Endothelial cell of umbilical vein (primary cell): ENCODE measurements at regions of chr1 and their contacts with region 1.

Region 1: GRCh38 chr1:90850898-90851710 is 134.0 kb upstream of the BARHL2 start:
- DNase-seq: peak; percentile 55
- H3K4me3 ChIP-seq: peak overlapping the region; percentile 32 to 45 (median 42)
- H3K27ac ChIP-seq: no peak overlapping the region
- H3K4me1 ChIP-seq: peaks cover 12% of the 10 kb centered on the region
- H3K27me3 ChIP-seq: peaks cover 14 to 44% of the 10 kb centered on the region in 2 experiments
- CTCF ChIP-seq: peak; percentile 24 to 68
- POLR2A ChIP-seq: no peak

Region 2: GRCh38 chr1:90721210-90722194 is 129.6 kb before region 1 on chr1:
- CTCF ChIA-PET with region 1: interaction called, 16 read pairs
- POLR2A ChIA-PET with region 1: no interaction called
- dilution Hi-C with region 1: no loop called
- intact Hi-C with region 1: loop called (anchors 5 kb)
- DNase-seq: peak; percentile 75
- H3K4me3 ChIP-seq: no peak overlapping the region
- H3K27ac ChIP-seq: no peak overlapping the region
- H3K4me1 ChIP-seq: peaks cover 2% of the 10 kb centered on the region
- H3K27me3 ChIP-seq: peaks cover 85 to 97% of the 10 kb centered on the region in 2 experiments
- CTCF ChIP-seq: peak; percentile 87 to 96
- POLR2A ChIP-seq: no peak

Region 3: GRCh38 chr1:90729504-90730242 is 121.4 kb before region 1 on chr1:
- CTCF ChIA-PET with region 1: interaction called, 3 read pairs
- POLR2A ChIA-PET with region 1: no interaction called
- dilution Hi-C with region 1: no loop called
- intact Hi-C with region 1: loop called (anchors 5 kb)
- DNase-seq: no peak
- H3K4me3 ChIP-seq: no peak overlapping the region
- H3K27ac ChIP-seq: no peak overlapping the region
- H3K4me1 ChIP-seq: peaks cover 2% of the 10 kb centered on the region
- H3K27me3 ChIP-seq: peaks cover 75 to 94% of the 10 kb centered on the region in 2 experiments
- CTCF ChIP-seq: peak; percentile 38 to 43
- POLR2A ChIP-seq: no peak

Region 4: DNA sequence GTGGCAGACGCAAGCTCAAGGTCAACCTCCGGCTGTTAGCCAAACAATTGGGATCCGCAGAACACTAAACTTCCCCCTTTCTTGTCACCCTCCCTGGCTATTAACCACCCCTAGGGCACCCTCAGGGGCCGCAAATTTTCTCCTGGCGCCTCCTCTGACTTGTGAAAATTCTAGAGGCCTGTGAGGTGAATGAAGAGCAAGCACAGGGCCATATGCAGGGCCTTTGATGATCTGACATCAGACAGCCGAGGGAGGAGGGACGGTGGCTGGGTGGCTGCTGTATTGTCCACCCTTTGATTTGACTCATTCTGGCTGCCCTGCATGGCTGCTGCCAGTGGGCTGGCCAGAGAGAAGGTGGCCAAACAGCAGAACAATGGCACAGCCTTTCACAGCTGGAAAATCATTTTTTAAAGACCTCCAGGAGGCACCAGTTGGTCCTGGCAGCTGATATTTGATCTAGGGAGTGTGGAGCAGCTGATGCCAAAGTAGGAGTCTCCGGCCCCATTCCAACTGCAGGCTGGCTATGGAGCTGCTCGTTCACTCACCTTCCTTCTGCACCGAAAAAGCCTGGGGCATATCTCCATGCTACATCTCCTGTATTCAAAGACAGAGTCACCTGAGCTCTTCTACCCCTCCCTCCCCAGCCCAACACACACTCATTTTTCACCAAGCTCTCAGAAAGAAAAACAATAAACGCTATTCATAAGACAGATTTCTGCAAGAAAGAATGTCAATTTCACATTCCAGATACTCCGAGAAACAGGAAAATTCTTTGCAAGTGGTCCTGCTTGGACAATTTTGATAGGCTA is 89.1 kb before region 1 on chr1:
- CTCF ChIA-PET with region 1: no interaction called
- POLR2A ChIA-PET with region 1: no interaction called
- dilution Hi-C with region 1: no loop called
- intact Hi-C with region 1: no loop called
- DNase-seq: no peak
- H3K4me3 ChIP-seq: no peak overlapping the region
- H3K27ac ChIP-seq: no peak overlapping the region
- H3K4me1 ChIP-seq: no peaks in the 10 kb centered on the region
- H3K27me3 ChIP-seq: no peaks in the 10 kb centered on the region
- CTCF ChIP-seq: no peak
- POLR2A ChIP-seq: no peak

Region 5: DNA sequence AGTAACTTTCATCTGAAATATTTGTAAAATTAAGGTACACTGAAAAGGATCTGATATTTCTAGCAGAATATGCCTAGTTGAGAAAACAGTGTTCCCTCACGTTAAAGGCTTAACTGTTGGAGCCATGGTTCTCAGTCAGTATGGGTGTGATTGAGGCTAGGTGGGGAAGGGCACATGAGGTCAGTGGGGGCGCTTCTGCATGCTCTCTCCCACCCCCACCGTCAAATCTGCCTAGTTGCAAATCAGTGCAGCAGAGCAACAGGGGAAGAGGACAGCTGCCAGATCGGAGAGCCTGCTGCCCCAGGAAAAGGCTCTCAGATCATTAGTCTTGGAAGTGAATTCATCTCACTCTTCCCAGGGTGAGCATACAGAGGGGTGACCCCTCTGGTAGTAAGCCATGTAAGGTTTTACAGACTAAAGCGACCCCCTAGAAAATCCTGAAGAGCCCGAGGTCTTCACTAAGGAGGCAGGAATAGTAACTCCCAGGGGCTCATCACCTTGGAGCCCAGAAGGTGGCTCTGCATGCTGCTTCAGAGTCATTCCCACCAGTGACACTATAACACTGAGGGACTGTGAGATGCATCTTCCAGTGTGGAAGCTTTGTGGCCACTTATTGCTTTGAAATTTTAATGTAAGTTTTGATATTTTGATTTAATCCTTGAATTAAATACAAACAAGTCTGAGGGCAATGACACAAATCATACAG is 50.9 kb before region 1 on chr1:
- CTCF ChIA-PET with region 1: no interaction called
- POLR2A ChIA-PET with region 1: no interaction called
- dilution Hi-C with region 1: no loop called
- intact Hi-C with region 1: no loop called
- DNase-seq: no peak
- H3K4me3 ChIP-seq: no peak overlapping the region
- H3K27ac ChIP-seq: no peak overlapping the region
- H3K4me1 ChIP-seq: no peaks in the 10 kb centered on the region
- H3K27me3 ChIP-seq: no peaks in the 10 kb centered on the region
- CTCF ChIP-seq: no peak
- POLR2A ChIP-seq: no peak

Region 6: GRCh38 chr1:90840352-90840751 is 10.8 kb before region 1 on chr1:
- CTCF ChIA-PET with region 1: interaction called, 6 read pairs
- POLR2A ChIA-PET with region 1: no interaction called
- dilution Hi-C with region 1: no loop called
- intact Hi-C with region 1: loop called (anchors 1 kb)
- DNase-seq: no peak
- H3K4me3 ChIP-seq: no peak overlapping the region
- H3K27ac ChIP-seq: no peak overlapping the region
- H3K4me1 ChIP-seq: no peaks in the 10 kb centered on the region
- H3K27me3 ChIP-seq: peaks cover 72 to 79% of the 10 kb centered on the region in 2 experiments
- CTCF ChIP-seq: no peak
- POLR2A ChIP-seq: no peak

Region 7: DNA sequence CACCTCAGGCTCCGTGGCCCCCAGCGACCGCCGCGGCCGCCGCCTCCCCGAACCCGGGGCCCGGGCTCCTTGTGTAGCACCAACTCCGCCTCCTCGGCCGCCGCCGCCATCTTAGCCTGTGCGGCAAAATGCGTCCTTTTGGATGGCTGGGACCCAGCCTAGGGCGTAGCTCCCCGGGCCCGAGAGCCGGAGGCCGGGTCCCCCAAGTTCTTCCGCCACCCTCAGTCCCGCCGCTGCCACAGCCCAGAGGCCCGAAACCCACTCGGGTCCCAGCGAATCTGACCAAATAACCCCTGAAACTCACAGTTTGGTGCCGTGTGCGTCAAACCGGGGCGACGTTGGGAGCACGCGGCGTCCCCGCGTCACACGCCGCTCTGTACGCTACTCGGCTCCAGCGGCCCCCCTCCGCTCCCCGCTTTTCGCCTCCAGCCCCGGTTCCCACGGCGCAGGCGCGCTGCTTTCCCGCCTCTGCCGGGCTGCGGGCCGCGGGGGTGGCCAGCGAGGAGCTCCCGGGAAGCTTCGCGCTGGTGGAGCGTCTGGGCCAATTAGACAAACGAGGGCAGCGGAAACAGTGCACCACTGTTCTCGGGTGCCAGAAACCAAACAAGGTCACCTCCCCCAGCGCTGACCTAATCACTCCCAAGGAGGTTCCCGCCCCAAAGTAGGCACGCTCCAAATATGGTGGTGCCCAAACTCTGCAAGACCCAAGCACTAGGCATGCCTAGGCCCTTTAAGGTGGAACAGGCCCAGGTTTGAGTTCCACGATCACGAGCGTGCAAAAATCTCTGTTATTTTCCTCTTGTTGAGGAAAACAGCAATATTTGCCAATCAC is 170.8 kb after region 1 on chr1 and contains the start of gene ZNF644:
- CTCF ChIA-PET with region 1: no interaction called
- POLR2A ChIA-PET with region 1: no interaction called
- dilution Hi-C with region 1: no loop called
- intact Hi-C with region 1: loop called (anchors 2 kb)
- DNase-seq: peak; percentile 84
- H3K4me3 ChIP-seq: peak within 1 kb of the TSS; percentile 72 to 99 (median 96)
- H3K27ac ChIP-seq: peak within 1 kb of the TSS; percentile 97
- H3K4me1 ChIP-seq: peaks cover 19% of the 10 kb centered on the region
- H3K27me3 ChIP-seq: no peaks in the 10 kb centered on the region
- CTCF ChIP-seq: no peak
- POLR2A ChIP-seq: peak; percentile 53
- total RNA-seq, gene ZNF644: 38.7 and 47.0 TPM in 2 replicates